ENCODE measurements at regions of chr3 and their contacts with region 1.

Region 1: DNA sequence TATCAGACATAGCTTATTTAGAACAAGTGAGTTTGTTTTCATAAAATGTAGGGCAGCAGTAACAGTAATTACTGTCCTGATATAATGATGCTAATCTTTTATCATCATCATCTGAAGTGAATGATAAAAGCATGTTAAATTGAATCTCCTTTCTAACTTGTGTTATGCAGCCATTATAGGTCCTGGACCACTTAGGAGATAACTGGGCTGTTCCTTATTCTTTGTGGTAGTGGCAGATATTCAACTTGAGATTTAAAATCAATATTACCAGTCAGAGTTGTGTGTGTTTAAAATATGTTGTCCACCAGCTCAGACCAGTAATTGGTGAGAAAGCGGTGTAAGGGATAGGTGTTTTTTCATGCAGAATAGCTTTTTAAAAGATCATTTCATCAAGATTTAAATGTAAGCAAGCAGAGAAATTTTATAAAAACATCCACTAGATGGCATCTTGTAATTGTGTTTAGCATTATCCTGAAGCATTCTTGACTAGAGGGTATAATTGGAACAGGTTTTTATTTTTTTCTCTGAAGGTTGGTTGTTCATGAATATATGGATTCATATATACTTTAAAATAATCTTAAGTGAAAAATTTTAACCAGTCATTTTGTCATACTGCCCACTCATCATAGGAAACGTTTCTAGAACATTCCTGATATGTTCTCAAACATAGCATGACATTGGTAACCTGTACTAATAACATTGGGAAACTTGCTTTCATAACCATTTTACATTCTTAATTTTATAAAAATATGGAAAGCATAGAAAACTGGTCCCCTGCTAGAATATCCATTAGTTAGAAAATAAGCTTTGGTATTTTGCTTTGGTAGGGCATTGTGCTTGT is 153.9 kb downstream of the BBX start:
- DNase-seq: no peak
- H3K4me3 ChIP-seq: no peak overlapping the region
- H3K27me3 ChIP-seq: no peaks in the 10 kb centered on the region
- CTCF ChIP-seq: peak; percentile 41

Region 2: GRCh38 chr3:107660306-107660976 is 16.2 kb before region 1 on chr3:
- CTCF ChIA-PET with region 1: interaction called, 14 read pairs
- POLR2A ChIA-PET with region 1: no interaction called
- DNase-seq: peak; percentile 65
- H3K4me3 ChIP-seq: no peak overlapping the region
- H3K27me3 ChIP-seq: no peaks in the 10 kb centered on the region
- CTCF ChIP-seq: peak; percentile 63

Region 3: GRCh38 chr3:107729686-107730085 is 53.0 kb after region 1 on chr3:
- CTCF ChIA-PET with region 1: interaction called, 10 read pairs
- POLR2A ChIA-PET with region 1: no interaction called
- DNase-seq: no peak
- H3K4me3 ChIP-seq: no peak overlapping the region
- H3K27me3 ChIP-seq: no peaks in the 10 kb centered on the region
- CTCF ChIP-seq: no peak

Region 4: GRCh38 chr3:107740992-107741896 is 64.6 kb after region 1 on chr3:
- CTCF ChIA-PET with region 1: interaction called, 24 read pairs
- POLR2A ChIA-PET with region 1: no interaction called
- DNase-seq: no peak
- H3K4me3 ChIP-seq: no peak overlapping the region
- H3K27me3 ChIP-seq: no peaks in the 10 kb centered on the region
- CTCF ChIP-seq: peak; percentile 46

Region 5: GRCh38 chr3:107927361-107928083 is 250.8 kb after region 1 on chr3:
- CTCF ChIA-PET with region 1: interaction called, 11 read pairs
- POLR2A ChIA-PET with region 1: no interaction called
- DNase-seq: no peak
- H3K4me3 ChIP-seq: peak overlapping the region; percentile 53
- H3K27me3 ChIP-seq: peaks cover 3% of the 10 kb centered on the region; the same call in 1 of the 2 replicates
- CTCF ChIP-seq: peak; percentile 97

Measured in BJ (cell line).